Endothelial cell of umbilical vein (primary cell): ENCODE measurements at regions of chr12 and their contacts with region 1.

Region 1: GRCh38 chr12:110371408-110372055 is 32.0 kb downstream of the ANAPC7 start:
- DNase-seq: no peak
- H3K4me3 ChIP-seq: no peak overlapping the region
- H3K27ac ChIP-seq: no peak overlapping the region
- H3K4me1 ChIP-seq: no peaks in the 10 kb centered on the region
- H3K27me3 ChIP-seq: no peaks in the 10 kb centered on the region
- CTCF ChIP-seq: no peak
- POLR2A ChIP-seq: no peak

Region 2: GRCh38 chr12:110355073-110355472 is 16.5 kb before region 1 on chr12:
- CTCF ChIA-PET with region 1: interaction called, 19 read pairs
- POLR2A ChIA-PET with region 1: interaction called, 3 read pairs
- dilution Hi-C with region 1: no loop called
- intact Hi-C with region 1: no loop called
- DNase-seq: no peak
- H3K4me3 ChIP-seq: no peak overlapping the region
- H3K27ac ChIP-seq: no peak overlapping the region
- H3K4me1 ChIP-seq: peaks cover 16% of the 10 kb centered on the region
- H3K27me3 ChIP-seq: no peaks in the 10 kb centered on the region
- CTCF ChIP-seq: peak; percentile 22 to 27
- POLR2A ChIP-seq: no peak